Mammary epithelial cell (primary cell): ENCODE measurements at regions of chr9 and their contacts with region 1.

Region 1: DNA sequence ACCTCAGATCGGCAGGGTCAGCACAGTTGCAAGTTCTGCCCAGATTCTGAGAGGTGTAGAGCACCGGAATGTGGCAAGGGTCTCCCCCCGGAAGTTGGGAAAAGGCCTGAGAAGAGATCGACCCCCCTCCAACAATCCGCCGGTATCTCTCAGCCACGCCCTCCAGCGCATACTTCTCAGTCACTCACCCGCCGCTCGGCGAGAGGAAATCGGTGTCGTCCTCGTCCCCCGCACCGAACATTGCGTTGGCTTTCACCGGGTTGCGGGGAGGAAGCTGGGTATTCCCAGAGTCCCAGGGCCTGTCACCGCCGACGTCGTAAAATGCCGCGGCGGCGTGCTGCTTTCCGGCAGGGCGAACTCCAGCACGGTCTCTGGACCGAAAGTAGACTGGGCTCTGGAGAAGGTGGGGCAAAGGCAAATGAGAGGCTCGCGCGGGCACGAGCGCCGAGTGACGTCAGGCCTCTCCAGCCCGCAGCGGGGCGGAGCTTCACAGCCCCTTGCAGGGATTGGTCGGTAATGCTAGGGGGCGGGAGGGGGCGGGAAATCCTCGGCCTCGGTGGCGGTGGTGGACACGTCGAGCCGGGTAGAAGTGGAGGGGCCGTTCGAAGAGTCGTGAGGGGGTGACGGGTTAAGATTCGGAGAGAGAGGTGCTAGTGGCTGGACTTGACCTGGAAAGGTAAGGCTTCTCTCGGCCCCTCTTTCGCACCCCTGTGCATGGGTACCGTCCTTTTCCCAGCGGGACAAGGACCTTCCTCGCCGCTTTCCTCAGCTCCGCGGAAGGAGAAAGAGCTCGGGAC is at the starts of genes FKBP15 and SLC31A1:
- DNase-seq: peak; percentile 99
- H3K4me3 ChIP-seq: peak within 1 kb of the TSS; percentile 64 to 94 (median 67)
- H3K27ac ChIP-seq: peak within 1 kb of the TSS; percentile 88
- H3K4me1 ChIP-seq: peaks cover 22% of the 10 kb centered on the region
- H3K27me3 ChIP-seq: no peaks in the 10 kb centered on the region
- CTCF ChIP-seq: no peak
- total RNA-seq, gene FKBP15: 20.7 to 29.5 TPM
- total RNA-seq, gene SLC31A1: 31.5 to 43.2 TPM

Region 2: DNA sequence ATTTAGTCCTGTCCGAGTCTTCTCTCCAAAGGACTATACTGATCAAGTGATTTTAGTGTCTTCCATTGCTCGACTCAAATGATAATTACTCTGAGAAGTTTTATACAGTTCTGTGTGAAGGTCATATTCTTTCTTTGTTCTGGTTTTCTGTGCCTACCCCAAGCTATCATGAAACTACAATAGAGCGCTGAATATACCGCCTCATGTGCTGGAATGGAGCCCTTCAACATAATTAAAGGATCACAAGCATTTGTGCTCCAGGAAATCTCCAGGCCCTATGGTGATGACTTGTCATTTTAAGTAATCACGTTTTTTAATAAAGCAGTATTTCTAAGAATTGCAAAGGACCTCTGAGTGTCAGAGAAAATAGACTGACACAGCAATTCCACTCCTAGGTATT is 81.2 kb before region 1 on chr9:
- CTCF ChIA-PET with region 1: no interaction called
- dilution Hi-C with region 1: no loop called
- in situ Hi-C with region 1: no loop called
- intact Hi-C with region 1: no loop called
- DNase-seq: no peak
- H3K4me3 ChIP-seq: no peak overlapping the region
- H3K27ac ChIP-seq: no peak overlapping the region
- H3K4me1 ChIP-seq: no peaks in the 10 kb centered on the region
- H3K27me3 ChIP-seq: no peaks in the 10 kb centered on the region
- CTCF ChIP-seq: no peak

Region 3: DNA sequence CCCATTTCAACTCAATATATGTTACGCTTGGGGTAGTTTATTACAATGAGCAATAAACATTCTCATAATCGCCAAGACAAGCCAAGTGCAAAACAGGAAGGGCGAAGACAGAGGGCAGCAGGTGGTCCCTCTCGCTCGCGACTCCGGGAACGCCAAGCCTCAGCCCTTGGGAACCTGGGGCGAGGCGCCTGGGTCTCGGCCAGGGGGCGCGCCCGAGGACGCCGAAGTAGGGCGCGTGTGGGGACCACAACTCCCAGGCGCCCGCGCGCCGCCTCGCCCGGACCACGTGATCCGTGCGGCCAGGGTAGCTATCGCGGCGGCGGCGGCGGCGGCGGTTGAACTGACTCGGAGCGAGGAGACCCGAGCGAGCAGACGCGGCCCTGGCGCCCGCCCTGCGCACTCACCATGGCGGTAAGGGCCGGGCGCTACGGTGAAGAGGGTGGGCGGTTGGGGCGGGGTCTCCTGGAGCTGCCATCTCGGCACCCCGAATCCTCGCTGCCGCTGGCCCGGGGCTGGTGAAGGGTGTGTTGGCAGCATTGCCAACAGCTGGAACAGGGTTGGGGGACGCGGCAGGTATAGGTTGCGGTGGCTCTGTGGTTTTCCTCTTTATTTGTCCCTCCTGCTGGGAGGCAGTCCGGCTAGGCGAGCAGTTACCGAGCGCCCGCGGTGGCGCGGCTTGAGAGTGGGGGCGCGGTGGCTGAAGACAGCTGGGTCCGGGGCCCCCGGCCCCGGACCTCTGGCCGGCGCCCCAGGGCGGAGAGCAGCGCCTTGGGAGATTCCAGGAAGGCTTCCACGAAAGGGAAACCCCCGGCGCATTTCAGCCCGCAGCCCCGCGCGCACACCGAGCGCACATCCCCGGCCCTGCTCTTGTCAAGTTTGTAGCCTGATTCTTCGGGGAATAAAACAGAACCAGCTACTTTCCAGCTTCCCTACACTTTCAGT is 70.3 kb before region 1 on chr9 and contains the start of gene SLC31A2:
- CTCF ChIA-PET with region 1: no interaction called
- dilution Hi-C with region 1: no loop called
- in situ Hi-C with region 1: no loop called
- intact Hi-C with region 1: loop called (anchors 1 kb)
- DNase-seq: peak; percentile 84
- H3K4me3 ChIP-seq: peak within 1 kb of the TSS; percentile 82 to 93 (median 92)
- H3K27ac ChIP-seq: peak within 1 kb of the TSS; percentile 89
- H3K4me1 ChIP-seq: peaks cover 44% of the 10 kb centered on the region
- H3K27me3 ChIP-seq: no peaks in the 10 kb centered on the region
- CTCF ChIP-seq: peak in 1 of 2 donors; percentile 51
- total RNA-seq, gene SLC31A2: 68.5 to 80.7 TPM

Region 4: DNA sequence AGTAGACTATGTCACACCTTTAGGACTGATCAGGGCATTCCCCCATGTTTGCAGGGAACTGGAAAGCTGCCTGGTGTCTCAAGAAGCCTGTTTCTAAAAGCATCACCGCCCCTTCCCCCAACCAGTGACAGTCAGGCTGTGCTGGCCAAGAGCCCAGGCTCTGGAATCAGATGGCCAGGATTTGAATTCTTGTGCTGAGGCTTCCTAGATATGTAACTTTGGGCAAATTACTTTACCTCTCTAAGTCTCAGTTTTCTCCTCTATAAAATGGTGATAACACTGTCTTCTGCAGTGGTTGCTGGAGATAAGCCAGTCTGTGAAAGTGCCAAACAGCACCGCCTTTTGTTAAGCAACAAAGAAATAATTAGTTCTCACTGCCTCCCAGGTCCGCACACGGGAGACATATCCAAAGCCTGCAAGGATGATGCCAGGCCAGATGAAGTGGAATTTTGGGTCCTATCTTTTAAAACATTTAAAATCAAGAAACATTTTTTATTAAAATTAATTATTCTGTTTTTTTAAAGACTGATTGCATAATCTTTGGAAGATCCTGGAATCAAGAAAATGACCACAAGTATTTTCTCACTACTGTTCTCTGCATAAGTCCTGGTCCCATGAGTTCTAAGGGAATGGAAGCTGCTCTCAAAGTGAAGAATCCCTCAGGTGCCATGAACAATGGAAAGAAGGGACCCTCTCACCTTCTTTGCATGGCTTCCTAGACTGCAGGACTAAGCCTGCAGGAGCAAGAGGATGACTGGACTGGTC is 56.5 kb before region 1 on chr9:
- CTCF ChIA-PET with region 1: no interaction called
- dilution Hi-C with region 1: loop called (anchors 5 kb)
- in situ Hi-C with region 1: loop called in 1 of 2 experiments (anchors 10 kb)
- intact Hi-C with region 1: no loop called
- DNase-seq: no peak
- H3K4me3 ChIP-seq: no peak overlapping the region
- H3K27ac ChIP-seq: no peak overlapping the region
- H3K4me1 ChIP-seq: no peaks in the 10 kb centered on the region
- H3K27me3 ChIP-seq: no peaks in the 10 kb centered on the region
- CTCF ChIP-seq: no peak

Region 5: GRCh38 chr9:113368982-113369869 is 148.0 kb after region 1 on chr9:
- CTCF ChIA-PET with region 1: no interaction called
- dilution Hi-C with region 1: no loop called
- in situ Hi-C with region 1: no loop called
- intact Hi-C with region 1: no loop called
- DNase-seq: no peak
- H3K4me3 ChIP-seq: no peak overlapping the region
- H3K27ac ChIP-seq: no peak overlapping the region
- H3K4me1 ChIP-seq: no peaks in the 10 kb centered on the region
- H3K27me3 ChIP-seq: no peaks in the 10 kb centered on the region
- CTCF ChIP-seq: no peak

Region 6: DNA sequence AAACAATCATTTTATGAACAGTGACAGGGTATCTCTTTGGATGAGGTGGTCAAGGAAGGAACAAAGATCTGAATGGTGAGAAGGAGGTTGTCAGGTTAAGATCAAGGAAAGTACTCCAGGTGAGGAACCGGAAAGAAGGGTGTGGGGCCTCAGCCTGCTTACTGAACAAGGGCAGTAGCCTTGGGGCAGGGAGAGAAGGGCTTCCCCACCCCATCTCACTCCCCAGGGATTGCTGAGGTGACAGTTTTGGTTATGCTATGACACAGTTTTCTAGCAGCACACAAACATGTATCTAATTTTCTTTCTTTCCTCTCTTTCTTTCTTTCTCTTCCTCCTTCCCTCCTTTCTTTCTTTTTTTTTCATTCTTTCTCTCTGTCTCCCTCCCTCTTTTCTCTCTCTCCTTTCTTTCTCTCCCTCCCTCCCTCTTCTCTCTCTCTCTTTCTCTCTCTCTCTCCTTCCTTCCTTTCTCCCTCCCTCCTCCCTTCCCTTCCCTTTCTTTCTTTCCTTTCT is 159.7 kb after region 1 on chr9:
- CTCF ChIA-PET with region 1: no interaction called
- dilution Hi-C with region 1: no loop called
- in situ Hi-C with region 1: no loop called
- intact Hi-C with region 1: no loop called
- DNase-seq: no peak
- H3K4me3 ChIP-seq: no peak overlapping the region
- H3K27ac ChIP-seq: no peak overlapping the region
- H3K4me1 ChIP-seq: peaks cover 5% of the 10 kb centered on the region
- H3K27me3 ChIP-seq: no peaks in the 10 kb centered on the region
- CTCF ChIP-seq: no peak

Region 7: GRCh38 chr9:113410207-113410864 is 189.1 kb after region 1 on chr9 and contains the starts of genes C9orf43 and POLE3:
- CTCF ChIA-PET with region 1: no interaction called
- dilution Hi-C with region 1: no loop called
- in situ Hi-C with region 1: no loop called
- intact Hi-C with region 1: loop called (anchors 2 kb)
- DNase-seq: peak; percentile 96
- H3K4me3 ChIP-seq: peak within 1 kb of the TSS; percentile 89 to 98 (median 97)
- H3K27ac ChIP-seq: peak within 1 kb of the TSS; percentile 96
- H3K4me1 ChIP-seq: peaks cover 13% of the 10 kb centered on the region
- H3K27me3 ChIP-seq: no peaks in the 10 kb centered on the region
- CTCF ChIP-seq: no peak
- total RNA-seq, gene C9orf43: 0.56 to 0.83 TPM
- total RNA-seq, gene POLE3: 42.8 to 50.2 TPM